Activated naive CD4-positive, alpha-beta T cell treated with anti-CD3 and anti-CD28 coated beads for 36 hours (primary cell): ENCODE measurements at regions of chr1 and their contacts with region 1.

Region 1: DNA sequence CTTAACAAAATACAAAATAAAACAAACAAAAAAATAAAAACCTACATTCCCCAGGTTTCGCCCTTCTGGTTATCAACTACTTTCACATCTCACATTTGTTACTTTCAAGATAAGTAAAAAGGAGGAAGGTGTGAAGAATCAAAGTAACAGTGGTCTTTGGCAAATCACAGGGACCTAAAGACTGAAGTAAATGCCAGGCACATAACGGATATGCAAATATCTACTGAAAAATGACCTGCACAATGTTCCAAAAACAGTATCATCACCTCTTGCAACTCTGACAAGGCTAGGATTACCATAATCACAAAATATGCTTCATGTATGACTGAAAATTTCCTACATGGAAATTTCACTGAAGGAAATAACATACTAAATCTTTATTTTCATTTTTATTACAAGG is 29.3 kb downstream of the COP1 start:
- DNase-seq: no peak
- H3K4me3 Mint-ChIP-seq: peak overlapping the region; percentile 2
- H3K27ac Mint-ChIP-seq: peak overlapping the region; percentile 82
- H3K4me1 Mint-ChIP-seq: peaks cover 51% of the 10 kb centered on the region
- H3K27me3 Mint-ChIP-seq: no peaks in the 10 kb centered on the region

Region 2: GRCh38 chr1:176033474-176033873 is 144.3 kb before region 1 on chr1:
- CTCF ChIA-PET with region 1: no interaction called
- intact Hi-C with region 1: loop called (anchors 1 kb)
- DNase-seq: no peak
- H3K4me3 Mint-ChIP-seq: no peak overlapping the region
- H3K27ac Mint-ChIP-seq: no peak overlapping the region
- H3K4me1 Mint-ChIP-seq: peaks cover 2% of the 10 kb centered on the region
- H3K27me3 Mint-ChIP-seq: no peaks in the 10 kb centered on the region

Region 3: GRCh38 chr1:176159993-176160392 is 17.8 kb before region 1 on chr1:
- CTCF ChIA-PET with region 1: no interaction called
- intact Hi-C with region 1: loop called (anchors 1 kb)
- DNase-seq: no peak
- H3K4me3 Mint-ChIP-seq: peak overlapping the region; percentile 27
- H3K27ac Mint-ChIP-seq: peak overlapping the region; percentile 82
- H3K4me1 Mint-ChIP-seq: peaks cover 43% of the 10 kb centered on the region
- H3K27me3 Mint-ChIP-seq: no peaks in the 10 kb centered on the region

Region 4: DNA sequence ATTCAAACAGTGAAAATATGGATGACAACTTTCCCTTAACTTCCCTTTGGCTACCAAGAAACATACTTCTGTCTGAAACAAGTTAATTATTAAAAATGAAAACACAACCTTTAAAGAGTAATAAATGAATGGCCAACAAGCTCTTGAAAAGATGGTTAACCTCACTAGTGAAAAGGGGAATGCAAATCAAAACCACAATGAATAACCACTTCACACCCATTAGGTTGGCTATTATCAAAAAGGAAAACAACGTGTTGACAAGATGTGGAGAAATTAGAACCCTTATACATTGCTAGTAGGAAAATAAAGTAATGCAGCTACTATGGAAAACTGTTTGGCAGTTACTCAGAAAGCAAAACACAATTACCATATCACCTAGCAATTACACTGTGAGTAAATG is 15.3 kb after region 1 on chr1:
- CTCF ChIA-PET with region 1: interaction called, 4 read pairs
- intact Hi-C with region 1: loop called (anchors 2 kb)
- DNase-seq: no peak
- H3K4me3 Mint-ChIP-seq: no peak overlapping the region
- H3K27ac Mint-ChIP-seq: peak overlapping the region; percentile 44
- H3K4me1 Mint-ChIP-seq: peaks cover 75% of the 10 kb centered on the region
- H3K27me3 Mint-ChIP-seq: no peaks in the 10 kb centered on the region

Region 5: DNA sequence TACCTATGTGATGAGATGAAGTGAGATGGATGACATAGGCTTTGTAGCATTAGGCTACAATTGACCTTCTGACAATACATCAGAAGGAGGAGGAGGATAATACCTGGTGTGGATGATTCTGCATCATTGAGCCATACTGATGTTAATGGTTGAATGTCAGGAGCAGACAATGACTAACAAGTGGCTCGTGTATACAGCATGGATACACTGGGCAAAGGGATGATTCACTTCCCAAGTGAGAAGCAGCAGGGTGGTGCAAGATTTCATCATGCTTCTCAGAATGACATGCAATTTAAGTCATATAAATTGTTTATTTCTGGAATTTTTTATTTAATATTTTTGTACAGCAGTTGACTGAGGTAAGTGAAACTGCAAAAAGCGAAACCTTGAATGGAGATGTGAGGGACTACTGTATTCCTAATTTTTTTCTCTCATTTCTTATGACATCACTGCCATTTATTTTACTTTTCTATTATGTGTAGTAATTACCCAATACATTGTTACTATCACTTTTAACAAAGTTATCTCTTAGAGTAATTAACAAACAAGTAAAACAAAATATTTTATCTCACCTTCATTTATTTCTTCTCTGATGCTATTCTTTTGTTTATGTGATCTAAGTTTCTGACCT is 63.7 kb after region 1 on chr1:
- CTCF ChIA-PET with region 1: no interaction called
- intact Hi-C with region 1: loop called (anchors 5 kb)
- DNase-seq: peak; percentile 65
- H3K4me3 Mint-ChIP-seq: no peak overlapping the region
- H3K27ac Mint-ChIP-seq: peak overlapping the region; percentile 61
- H3K4me1 Mint-ChIP-seq: peaks cover 10% of the 10 kb centered on the region
- H3K27me3 Mint-ChIP-seq: peaks cover 13% of the 10 kb centered on the region

Region 6: GRCh38 chr1:176517484-176517883 is 339.7 kb after region 1 on chr1:
- CTCF ChIA-PET with region 1: no interaction called
- intact Hi-C with region 1: no loop called
- DNase-seq: peak; percentile 8
- H3K4me3 Mint-ChIP-seq: no peak overlapping the region
- H3K27ac Mint-ChIP-seq: no peak overlapping the region
- H3K4me1 Mint-ChIP-seq: no peaks in the 10 kb centered on the region
- H3K27me3 Mint-ChIP-seq: no peaks in the 10 kb centered on the region

Region 7: DNA sequence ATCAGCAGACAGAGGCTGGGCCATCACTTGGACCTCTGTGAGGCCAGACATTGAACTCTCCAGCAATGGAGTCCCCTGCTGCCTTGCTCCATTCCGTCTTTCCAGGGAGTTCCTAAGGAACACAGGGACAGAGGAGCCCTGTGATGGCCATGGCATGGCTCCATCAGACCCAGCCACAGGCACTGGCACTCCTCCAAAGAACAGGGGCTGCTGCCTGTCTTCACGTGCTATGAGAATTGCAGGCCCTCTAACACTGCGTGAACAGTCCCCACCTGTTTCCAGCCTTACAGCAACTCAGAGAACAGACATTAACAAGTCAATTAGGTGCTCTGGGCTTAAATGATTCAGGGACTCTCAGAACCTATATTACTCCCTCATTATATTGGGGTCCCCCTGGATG is 846.0 kb after region 1 on chr1:
- CTCF ChIA-PET with region 1: no interaction called
- intact Hi-C with region 1: no loop called
- DNase-seq: no peak
- H3K4me3 Mint-ChIP-seq: no peak overlapping the region
- H3K27ac Mint-ChIP-seq: no peak overlapping the region
- H3K4me1 Mint-ChIP-seq: no peaks in the 10 kb centered on the region
- H3K27me3 Mint-ChIP-seq: no peaks in the 10 kb centered on the region